ENCODE measurements at regions of chr22 and their contacts with region 1.

Region 1: DNA sequence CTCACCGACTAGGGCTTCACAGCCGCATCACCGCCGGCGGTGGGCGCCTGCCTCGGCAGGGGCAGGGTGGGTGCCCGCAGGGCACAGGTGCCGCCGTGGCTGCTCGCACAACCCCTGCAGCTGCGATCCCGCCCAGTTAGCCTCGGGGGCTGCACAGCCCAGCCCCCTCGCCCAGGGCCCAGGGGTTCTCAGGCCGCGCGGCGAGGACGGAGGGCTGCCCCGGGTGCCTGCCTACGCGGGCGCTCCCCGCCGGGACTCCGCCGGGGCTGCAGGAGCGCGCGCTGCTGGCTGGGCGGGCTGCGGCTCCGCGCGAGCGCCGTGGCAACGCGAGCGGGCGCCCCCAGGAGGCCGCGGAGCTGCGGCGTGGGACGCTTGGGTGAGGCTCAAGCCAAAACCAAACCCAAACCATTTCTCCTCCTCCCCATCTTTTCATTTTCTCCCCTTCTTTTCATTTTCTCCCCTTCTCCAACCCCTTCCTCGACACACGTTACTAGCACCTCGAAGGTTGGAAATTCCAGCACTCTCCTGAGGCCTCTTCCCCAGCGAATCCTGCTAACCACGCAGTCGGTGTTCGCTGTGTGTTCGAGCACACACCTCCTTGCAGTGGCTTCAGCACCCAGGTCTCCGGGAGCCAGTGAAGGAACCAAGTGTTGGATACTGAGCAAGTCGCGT is at the start of gene MICAL3:
- DNase-seq: peak; percentile 44 to 75 (median 63)
- H3K4me3 ChIP-seq: peak within 1 kb of the TSS in 2 of 4 donors; percentile 69 to 75
- H3K27ac ChIP-seq: peak within 1 kb of the TSS in 4 of 5 donors; percentile 34 to 84 (median 78)
- H3K4me1 ChIP-seq: peaks cover 4 to 9% of the 10 kb centered on the region in 2 donors
- H3K27me3 ChIP-seq: no peaks in the 10 kb centered on the region
- CTCF ChIP-seq: peak; percentile 5 to 71 (median 47)
- POLR2A ChIP-seq: peak in 1 of 2 donors; percentile 46
- total RNA-seq, gene MICAL3: 24.8 to 82.6 (median 42.9) TPM

Region 2: GRCh38 chr22:17884084-17884483 is 140.3 kb before region 1 on chr22:
- intact Hi-C with region 1: no loop called
- DNase-seq: no peak
- H3K4me3 ChIP-seq: no peak overlapping the region
- H3K27ac ChIP-seq: no peak overlapping the region
- H3K4me1 ChIP-seq: no peaks in the 10 kb centered on the region
- H3K27me3 ChIP-seq: no peaks in the 10 kb centered on the region
- CTCF ChIP-seq: no peak
- POLR2A ChIP-seq: no peak

Region 3: GRCh38 chr22:17897426-17897825 is 127.0 kb before region 1 on chr22:
- intact Hi-C with region 1: loop called in 1 of 2 experiments (anchors 5 kb)
- DNase-seq: no peak
- H3K4me3 ChIP-seq: no peak overlapping the region
- H3K27ac ChIP-seq: no peak overlapping the region
- H3K4me1 ChIP-seq: no peaks in the 10 kb centered on the region
- H3K27me3 ChIP-seq: no peaks in the 10 kb centered on the region
- CTCF ChIP-seq: no peak
- POLR2A ChIP-seq: no peak

Region 4: GRCh38 chr22:17910561-17911311 is 113.7 kb before region 1 on chr22:
- intact Hi-C with region 1: loop called in 1 of 2 experiments (anchors 10 kb)
- DNase-seq: peak; percentile 90 to 98 (median 96)
- H3K4me3 ChIP-seq: peak overlapping the region in 1 of 4 donors; percentile 3
- H3K27ac ChIP-seq: peak overlapping the region; percentile 77 to 94 (median 88)
- H3K4me1 ChIP-seq: peaks cover 28 to 40% of the 10 kb centered on the region in 2 donors
- H3K27me3 ChIP-seq: no peaks in the 10 kb centered on the region
- CTCF ChIP-seq: peak in 4 of 6 experiments; percentile 29 to 45 (median 36)
- POLR2A ChIP-seq: peak in 1 of 2 donors; percentile 65

Measured in adrenal gland (tissue), 19 donors.